GM12878 (cell line): ENCODE measurements at regions of chr18 and their contacts with region 1.

Region 1: GRCh38 chr18:59837586-59837985 is 62.2 kb upstream of the PMAIP1 start:
- DNase-seq: peak; percentile 82
- ATAC-seq: peak; percentile 72
- H3K4me3 ChIP-seq: no peak overlapping the region
- H3K27ac ChIP-seq: no peak overlapping the region
- H3K4me1 ChIP-seq: peaks cover 31% of the 10 kb centered on the region
- H3K27me3 ChIP-seq: no peaks in the 10 kb centered on the region
- CTCF ChIP-seq: peak; percentile 85 to 98 (median 91)
- EP300 ChIP-seq: no peak
- POLR2A ChIP-seq: no peak
- RAD21 ChIP-seq: peak; percentile 98

Region 2: GRCh38 chr18:59697236-59697932 is 140.2 kb before region 1 on chr18 and contains the start of gene CCBE1:
- CTCF ChIA-PET with region 1: no interaction called
- POLR2A ChIA-PET with region 1: no interaction called
- RAD21 ChIA-PET with region 1: no interaction called
- SMC1A ChIA-PET with region 1: no interaction called
- in situ Hi-C with region 1: no loop called
- intact Hi-C with region 1: no loop called
- DNase-seq: no peak
- ATAC-seq: peak; percentile 79
- H3K4me3 ChIP-seq: 0 out of 2 replicates have a peak within 1 kb of the TSS, but pooled peaks have one; percentile 9
- H3K27ac ChIP-seq: no peak within 1 kb of the TSS
- H3K4me1 ChIP-seq: no peaks in the 10 kb centered on the region
- H3K27me3 ChIP-seq: peaks cover 2 to 6% of the 10 kb centered on the region in 2 experiments
- CTCF ChIP-seq: peak; percentile 47 to 80 (median 66)
- EP300 ChIP-seq: no peak
- POLR2A ChIP-seq: no peak
- RAD21 ChIP-seq: peak; percentile 38; the same call in 1 of the 2 replicates
- polyA plus RNA-seq, gene CCBE1: not detected

Region 3: GRCh38 chr18:59876310-59876626 is 38.7 kb after region 1 on chr18:
- CTCF ChIA-PET with region 1: interaction called, 19 read pairs
- POLR2A ChIA-PET with region 1: interaction called, 6 read pairs
- RAD21 ChIA-PET with region 1: interaction called, 5 read pairs
- SMC1A ChIA-PET with region 1: interaction called, 17 read pairs
- in situ Hi-C with region 1: no loop called
- intact Hi-C with region 1: loop called (anchors 2 kb)
- DNase-seq: peak; percentile 86
- ATAC-seq: peak; percentile 79
- H3K4me3 ChIP-seq: peak overlapping the region; percentile 56; the same call in 1 of the 2 replicates
- H3K27ac ChIP-seq: peak overlapping the region; percentile 87
- H3K4me1 ChIP-seq: peaks cover 59% of the 10 kb centered on the region
- H3K27me3 ChIP-seq: no peaks in the 10 kb centered on the region
- CTCF ChIP-seq: no peak
- EP300 ChIP-seq: peak in 1 of 2 experiments; percentile 77; a peak in 3 of 4 replicates
- POLR2A ChIP-seq: no peak
- RAD21 ChIP-seq: no peak

Region 4: DNA sequence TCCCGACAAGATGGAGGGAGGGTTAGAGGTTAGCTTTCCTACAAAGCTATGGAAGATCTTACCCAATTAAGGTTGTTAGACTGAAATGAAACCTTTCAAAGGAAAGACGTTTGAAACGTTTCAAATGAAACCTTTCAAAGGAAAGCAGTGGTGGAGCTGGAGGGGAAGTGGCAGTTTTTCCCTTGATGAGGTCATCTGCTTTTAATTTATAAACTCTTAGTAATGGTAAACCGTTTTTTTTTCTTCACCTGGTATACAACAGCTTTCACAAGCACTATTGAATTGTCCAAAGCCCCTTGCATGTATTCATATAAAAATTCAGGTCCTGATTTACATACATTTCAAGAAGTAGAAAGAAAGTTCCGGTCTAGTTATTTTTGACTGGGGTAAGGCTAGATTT is 69.6 kb after region 1 on chr18:
- CTCF ChIA-PET with region 1: interaction called, 20 read pairs
- POLR2A ChIA-PET with region 1: interaction called, 10 read pairs
- RAD21 ChIA-PET with region 1: interaction called, 30 read pairs
- SMC1A ChIA-PET with region 1: interaction called, 54 read pairs
- in situ Hi-C with region 1: loop called (anchors 10 kb)
- intact Hi-C with region 1: loop called (anchors 1 kb)
- DNase-seq: no peak
- ATAC-seq: peak; percentile 16
- H3K4me3 ChIP-seq: peak overlapping the region; percentile 22; the same call in 1 of the 2 replicates
- H3K27ac ChIP-seq: peak overlapping the region; percentile 95
- H3K4me1 ChIP-seq: peaks cover 43% of the 10 kb centered on the region
- H3K27me3 ChIP-seq: no peaks in the 10 kb centered on the region
- CTCF ChIP-seq: no peak
- EP300 ChIP-seq: peak in 1 of 2 experiments; percentile 36; a peak in 1 of 4 replicates
- POLR2A ChIP-seq: no peak
- RAD21 ChIP-seq: no peak

Region 5: GRCh38 chr18:59957971-59958595 is 120.5 kb after region 1 on chr18:
- CTCF ChIA-PET with region 1: interaction called, 7 read pairs
- POLR2A ChIA-PET with region 1: interaction called, 5 read pairs
- RAD21 ChIA-PET with region 1: interaction called, 25 read pairs
- SMC1A ChIA-PET with region 1: interaction called, 23 read pairs
- in situ Hi-C with region 1: loop called (anchors 10 kb)
- intact Hi-C with region 1: no loop called
- DNase-seq: no peak
- ATAC-seq: peak; percentile 43
- H3K4me3 ChIP-seq: no peak overlapping the region
- H3K27ac ChIP-seq: peak overlapping the region; percentile 10; the same call in 1 of the 2 replicates
- H3K4me1 ChIP-seq: peaks cover 50% of the 10 kb centered on the region
- H3K27me3 ChIP-seq: no peaks in the 10 kb centered on the region
- CTCF ChIP-seq: no peak
- EP300 ChIP-seq: no peak
- POLR2A ChIP-seq: no peak
- RAD21 ChIP-seq: no peak

Region 6: GRCh38 chr18:59996370-59996966 is 158.9 kb after region 1 on chr18:
- CTCF ChIA-PET with region 1: interaction called, 235 read pairs
- POLR2A ChIA-PET with region 1: interaction called, 3 read pairs
- RAD21 ChIA-PET with region 1: interaction called, 63 read pairs
- SMC1A ChIA-PET with region 1: interaction called, 118 read pairs
- in situ Hi-C with region 1: no loop called
- intact Hi-C with region 1: no loop called
- DNase-seq: no peak
- ATAC-seq: peak; percentile 85
- H3K4me3 ChIP-seq: no peak overlapping the region
- H3K27ac ChIP-seq: no peak overlapping the region
- H3K4me1 ChIP-seq: no peaks in the 10 kb centered on the region
- H3K27me3 ChIP-seq: no peaks in the 10 kb centered on the region
- CTCF ChIP-seq: peak; percentile 74 to 79 (median 75)
- EP300 ChIP-seq: no peak
- POLR2A ChIP-seq: no peak
- RAD21 ChIP-seq: peak; percentile 70

Region 7: GRCh38 chr18:60413944-60414547 is 576.5 kb after region 1 on chr18:
- CTCF ChIA-PET with region 1: no interaction called
- POLR2A ChIA-PET with region 1: no interaction called
- RAD21 ChIA-PET with region 1: interaction called, 3 read pairs
- SMC1A ChIA-PET with region 1: no interaction called
- in situ Hi-C with region 1: no loop called
- intact Hi-C with region 1: loop called (anchors 5 kb)
- DNase-seq: no peak
- ATAC-seq: peak; percentile 74
- H3K4me3 ChIP-seq: no peak overlapping the region
- H3K27ac ChIP-seq: no peak overlapping the region
- H3K4me1 ChIP-seq: no peaks in the 10 kb centered on the region
- H3K27me3 ChIP-seq: no peaks in the 10 kb centered on the region
- CTCF ChIP-seq: peak; percentile 40 to 57 (median 50)
- EP300 ChIP-seq: no peak
- POLR2A ChIP-seq: no peak
- RAD21 ChIP-seq: peak; percentile 46

Region 8: DNA sequence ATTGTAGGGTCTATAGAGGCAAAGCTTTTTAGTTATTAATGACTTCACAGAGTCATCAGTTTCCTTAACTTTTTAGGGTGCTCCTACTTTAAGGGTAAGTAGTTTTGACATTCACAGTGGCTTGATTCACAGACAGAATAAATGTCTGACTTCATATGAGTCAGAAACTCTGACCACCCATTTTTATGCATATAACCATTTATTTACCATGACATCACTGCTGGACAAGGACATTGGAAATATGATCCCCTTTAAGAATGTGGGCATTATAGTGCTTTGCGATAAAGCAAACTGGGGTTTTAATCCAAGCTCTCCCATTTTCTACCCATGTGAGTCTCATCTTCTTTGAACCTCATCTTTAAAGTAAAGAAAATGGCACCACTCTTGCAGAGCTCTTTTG is 697.0 kb after region 1 on chr18:
- CTCF ChIA-PET with region 1: no interaction called
- POLR2A ChIA-PET with region 1: no interaction called
- RAD21 ChIA-PET with region 1: no interaction called
- SMC1A ChIA-PET with region 1: no interaction called
- in situ Hi-C with region 1: no loop called
- intact Hi-C with region 1: no loop called
- DNase-seq: no peak
- ATAC-seq: no peak
- H3K4me3 ChIP-seq: no peak overlapping the region
- H3K27ac ChIP-seq: no peak overlapping the region
- H3K4me1 ChIP-seq: no peaks in the 10 kb centered on the region
- H3K27me3 ChIP-seq: no peaks in the 10 kb centered on the region; a peak in 1 of 4 replicates
- CTCF ChIP-seq: no peak
- EP300 ChIP-seq: no peak
- POLR2A ChIP-seq: no peak
- RAD21 ChIP-seq: no peak